CD4-positive, alpha-beta memory T cell (primary cell): ENCODE measurements at regions of chr11 and their contacts with region 1.

Region 1: DNA sequence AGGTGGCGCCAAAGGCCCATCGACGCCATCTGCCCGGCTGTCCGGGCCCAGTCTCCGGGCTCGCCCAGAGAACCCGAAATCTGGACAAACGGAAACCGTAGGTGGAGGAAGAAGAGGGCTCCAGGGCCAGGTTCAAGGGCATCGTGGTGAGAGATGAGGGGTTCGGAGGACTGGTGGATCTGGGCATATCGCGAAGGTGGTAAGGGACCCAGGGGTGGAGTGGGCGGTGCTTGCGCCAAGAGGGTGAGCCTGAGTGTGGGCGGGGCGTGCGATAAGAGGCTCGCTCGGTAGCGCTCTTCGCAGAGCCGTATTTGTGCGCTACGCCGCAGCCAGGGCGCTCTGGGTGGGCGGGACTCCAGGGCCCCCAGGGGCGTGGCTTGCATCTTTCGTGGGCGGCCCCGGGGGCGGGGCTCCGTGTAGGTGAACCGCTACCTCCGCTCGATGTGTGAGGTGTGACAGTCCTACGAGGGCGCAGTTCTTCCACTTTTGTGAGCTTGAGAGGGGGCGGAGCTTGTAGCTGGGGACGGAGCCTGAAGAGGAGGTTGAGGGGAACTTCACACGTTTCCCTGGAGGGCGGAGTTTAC is 4.8 kb downstream of the CD248 start:
- DNase-seq: peak; percentile 97 to 99 (median 98)
- H3K4me3 ChIP-seq: peak overlapping the region; percentile 43 to 88
- H3K4me3 Mint-ChIP-seq: peak overlapping the region; percentile 89 to 97 (median 94)
- H3K27ac ChIP-seq: peak overlapping the region; percentile 62
- H3K27ac Mint-ChIP-seq: peak overlapping the region; percentile 93 to 100 (median 99)
- H3K4me1 ChIP-seq: peaks cover 22% of the 10 kb centered on the region
- H3K4me1 Mint-ChIP-seq: peaks cover 4 to 20% (median 8%) of the 10 kb centered on the region in 4 donors
- H3K27me3 ChIP-seq: no peaks in the 10 kb centered on the region
- H3K27me3 Mint-ChIP-seq: peaks cover 2 to 3% of the 10 kb centered on the region in 2 donors

Region 2: GRCh38 chr11:64959498-64959897 is 1352.6 kb before region 1 on chr11:
- CTCF ChIA-PET with region 1: no interaction called
- POLR2A ChIA-PET with region 1: no interaction called
- intact Hi-C with region 1: no loop called
- DNase-seq: no peak
- H3K4me3 ChIP-seq: no peak overlapping the region
- H3K4me3 Mint-ChIP-seq: no peak overlapping the region
- H3K27ac ChIP-seq: no peak overlapping the region
- H3K27ac Mint-ChIP-seq: no peak overlapping the region
- H3K4me1 ChIP-seq: no peaks in the 10 kb centered on the region
- H3K4me1 Mint-ChIP-seq: no peaks in the 10 kb centered on the region
- H3K27me3 ChIP-seq: no peaks in the 10 kb centered on the region
- H3K27me3 Mint-ChIP-seq: peaks cover 4 to 7% of the 10 kb centered on the region in 2 donors

Region 3: GRCh38 chr11:66222358-66223149 is 89.5 kb before region 1 on chr11:
- CTCF ChIA-PET with region 1: interaction called, 12 read pairs
- POLR2A ChIA-PET with region 1: no interaction called
- intact Hi-C with region 1: no loop called
- DNase-seq: peak; percentile 92 to 97 (median 94)
- H3K4me3 ChIP-seq: no peak overlapping the region
- H3K4me3 Mint-ChIP-seq: peak overlapping the region in 3 of 8 donors; percentile 4 to 30 (median 27)
- H3K27ac ChIP-seq: peak overlapping the region; percentile 89
- H3K27ac Mint-ChIP-seq: peak overlapping the region; percentile 92 to 99 (median 98)
- H3K4me1 ChIP-seq: peaks cover 11% of the 10 kb centered on the region
- H3K4me1 Mint-ChIP-seq: peaks cover 11 to 22% (median 13%) of the 10 kb centered on the region in 4 donors
- H3K27me3 ChIP-seq: no peaks in the 10 kb centered on the region
- H3K27me3 Mint-ChIP-seq: no peaks in the 10 kb centered on the region

Region 4: DNA sequence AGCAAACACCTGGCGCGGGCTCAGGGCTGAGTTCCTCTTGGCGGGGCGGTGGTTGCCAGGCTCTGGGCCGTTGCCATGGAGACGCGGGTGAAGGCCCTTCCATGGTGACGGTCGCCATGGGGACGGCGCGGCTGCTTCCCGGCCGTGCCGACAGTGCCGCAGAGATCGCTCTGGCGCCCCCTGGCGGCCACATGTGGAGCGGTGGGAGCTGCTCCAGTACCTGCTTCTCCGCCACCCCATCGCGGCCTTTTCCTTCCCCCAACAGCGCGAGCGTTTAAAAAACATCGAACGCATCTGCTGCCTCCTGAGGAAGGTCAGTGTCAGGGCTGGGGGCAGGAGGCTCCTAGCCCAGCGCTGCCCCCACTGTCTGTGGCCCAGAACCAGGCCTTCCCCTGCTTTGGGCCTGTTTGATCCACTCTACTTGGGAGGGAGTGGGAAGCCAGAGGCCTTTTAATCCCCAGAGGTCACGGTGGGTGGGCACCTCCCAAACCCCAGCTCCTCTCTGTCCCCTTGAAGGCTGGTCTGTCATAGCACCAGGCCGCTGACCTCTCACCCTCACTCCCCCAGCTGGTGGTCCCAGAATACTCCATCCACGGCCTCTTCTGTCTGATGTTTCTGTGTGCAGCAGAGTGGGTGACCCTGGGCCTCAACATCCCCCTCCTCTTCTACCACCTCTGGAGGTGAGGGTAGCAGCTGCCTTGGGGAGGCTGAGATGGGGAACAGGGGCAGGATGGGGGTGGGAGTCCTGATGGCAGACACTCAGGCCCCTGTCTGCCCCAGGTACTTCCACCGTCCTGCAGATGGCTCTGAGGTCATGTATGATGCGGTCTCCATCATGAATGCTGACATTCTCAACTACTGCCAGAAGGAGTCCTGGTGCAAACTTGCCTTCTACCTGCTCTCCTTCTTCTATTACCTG is 29.3 kb before region 1 on chr11:
- CTCF ChIA-PET with region 1: interaction called, 29 read pairs
- POLR2A ChIA-PET with region 1: interaction called, 53 read pairs
- intact Hi-C with region 1: loop called (anchors 1 kb)
- DNase-seq: peak; percentile 98 to 99 (median 99)
- H3K4me3 ChIP-seq: no peak overlapping the region
- H3K4me3 Mint-ChIP-seq: peak overlapping the region; percentile 11 to 81 (median 55)
- H3K27ac ChIP-seq: peak overlapping the region; percentile 62
- H3K27ac Mint-ChIP-seq: peak overlapping the region; percentile 86 to 96 (median 92)
- H3K4me1 ChIP-seq: peaks cover 30% of the 10 kb centered on the region
- H3K4me1 Mint-ChIP-seq: peaks cover 10 to 46% (median 29%) of the 10 kb centered on the region in 4 donors
- H3K27me3 ChIP-seq: no peaks in the 10 kb centered on the region
- H3K27me3 Mint-ChIP-seq: peaks cover 0 to 1% of the 10 kb centered on the region in 2 donors

Region 5: GRCh38 chr11:66322732-66323427 is 10.8 kb after region 1 on chr11:
- CTCF ChIA-PET with region 1: interaction called, 24 read pairs
- POLR2A ChIA-PET with region 1: interaction called, 32 read pairs
- intact Hi-C with region 1: loop called (anchors 1 kb)
- DNase-seq: no peak
- H3K4me3 ChIP-seq: no peak overlapping the region
- H3K4me3 Mint-ChIP-seq: no peak overlapping the region
- H3K27ac ChIP-seq: no peak overlapping the region
- H3K27ac Mint-ChIP-seq: peak overlapping the region in 1 of 7 donors; percentile 4
- H3K4me1 ChIP-seq: peaks cover 35% of the 10 kb centered on the region
- H3K4me1 Mint-ChIP-seq: peaks cover 18 to 39% (median 27%) of the 10 kb centered on the region in 4 donors
- H3K27me3 ChIP-seq: no peaks in the 10 kb centered on the region
- H3K27me3 Mint-ChIP-seq: no peaks in the 10 kb centered on the region

Region 6: DNA sequence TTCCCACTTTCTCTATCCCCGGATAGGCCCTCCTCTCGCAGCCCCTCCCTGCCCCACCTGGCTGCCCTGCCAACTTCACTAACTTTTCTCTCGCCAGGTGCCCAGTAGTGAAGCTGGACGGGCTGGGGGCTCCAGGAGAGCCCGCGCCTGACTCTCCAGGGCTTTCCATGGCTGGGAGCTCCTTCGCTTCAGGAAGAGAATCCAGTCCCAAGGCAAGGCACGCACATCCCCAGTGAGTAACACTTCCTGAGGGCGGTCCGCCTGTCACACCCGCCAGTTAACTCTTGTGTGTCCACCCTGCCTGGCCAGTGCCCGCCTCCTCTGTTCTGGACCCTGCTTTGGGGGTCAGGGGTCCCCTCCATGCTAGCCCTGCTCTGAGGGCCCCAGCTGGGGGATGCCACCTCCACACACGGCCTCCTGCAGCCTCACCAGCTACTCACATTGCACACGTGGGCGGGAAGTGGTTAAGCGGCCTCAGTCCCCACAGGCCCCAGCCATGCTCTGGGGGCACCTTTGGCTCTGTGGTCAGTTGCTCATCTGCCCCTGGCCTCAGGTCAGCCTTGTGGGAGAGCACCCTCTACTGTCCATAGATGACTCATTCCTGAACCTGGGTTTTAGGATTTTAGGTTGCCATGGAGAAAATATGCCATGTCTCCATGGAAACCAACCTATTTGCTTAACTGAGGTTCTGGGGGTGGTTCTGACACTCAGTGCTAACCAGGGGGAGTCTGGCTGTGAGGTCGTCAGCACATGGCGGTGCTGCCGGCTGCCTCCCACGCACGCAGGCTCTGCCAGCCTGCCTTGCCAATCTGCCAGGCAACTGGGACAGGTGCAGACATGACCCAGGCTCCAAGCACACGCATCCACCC is 24.4 kb after region 1 on chr11 and contains the start of gene RIN1:
- CTCF ChIA-PET with region 1: interaction called, 110 read pairs
- POLR2A ChIA-PET with region 1: interaction called, 9 read pairs
- intact Hi-C with region 1: no loop called
- DNase-seq: peak in 3 of 5 donors; percentile 25 to 64 (median 36)
- H3K4me3 ChIP-seq: peak within 1 kb of the TSS in 1 of 2 donors; percentile 41
- H3K4me3 Mint-ChIP-seq: peak within 1 kb of the TSS; percentile 80 to 90 (median 84)
- H3K27ac ChIP-seq: peak within 1 kb of the TSS; percentile 29
- H3K27ac Mint-ChIP-seq: peak within 1 kb of the TSS in 6 of 7 donors; percentile 6 to 75 (median 58)
- H3K4me1 ChIP-seq: peaks cover 18% of the 10 kb centered on the region
- H3K4me1 Mint-ChIP-seq: peaks cover 10 to 27% (median 16%) of the 10 kb centered on the region in 4 donors
- H3K27me3 ChIP-seq: no peaks in the 10 kb centered on the region
- H3K27me3 Mint-ChIP-seq: no peaks in the 10 kb centered on the region
- total RNA-seq, gene RIN1: 5.8 to 10.1 TPM

Region 7: DNA sequence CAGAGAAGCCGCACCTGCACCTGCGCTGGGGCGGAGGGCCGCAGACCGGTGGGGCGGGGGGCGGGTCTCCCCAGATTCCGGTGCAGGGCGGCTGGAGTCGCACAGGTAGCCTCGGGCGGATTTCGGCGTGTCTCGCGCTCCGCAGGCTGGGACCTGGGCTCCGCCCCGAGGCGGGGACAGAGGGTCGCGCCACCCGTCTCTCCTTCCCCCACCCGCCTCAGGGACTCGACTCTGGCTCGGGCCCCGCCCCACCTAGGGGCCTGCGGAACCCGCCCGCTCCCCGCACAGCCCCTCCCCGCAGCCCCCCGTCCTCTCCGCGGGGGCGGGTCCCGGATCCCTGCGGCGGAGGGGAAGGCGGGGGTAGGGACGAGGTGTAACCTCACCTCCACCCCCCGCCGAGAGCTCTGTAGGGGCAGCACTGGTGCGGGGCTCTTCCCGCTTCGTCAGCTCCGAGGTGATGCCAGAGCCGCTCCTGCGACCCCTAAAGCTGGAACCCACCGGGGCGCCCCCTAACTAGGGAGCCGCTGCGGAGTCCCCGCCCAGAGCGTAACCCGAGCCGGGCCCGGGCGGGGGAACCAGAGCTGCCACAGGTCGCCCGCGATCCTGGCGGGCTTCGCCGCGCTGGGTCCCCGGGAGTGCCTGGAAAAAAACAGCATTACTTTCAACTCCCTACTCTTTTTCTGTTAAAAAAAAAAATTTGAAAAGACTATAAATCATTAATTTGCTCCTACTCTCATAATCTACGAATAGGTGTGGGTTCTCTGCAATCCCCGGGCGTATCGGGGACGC is 59.8 kb after region 1 on chr11 and contains the start of gene SLC29A2:
- CTCF ChIA-PET with region 1: interaction called, 10 read pairs
- POLR2A ChIA-PET with region 1: interaction called, 24 read pairs
- intact Hi-C with region 1: no loop called
- DNase-seq: peak; percentile 72 to 78 (median 72)
- H3K4me3 ChIP-seq: peak within 1 kb of the TSS; percentile 49 to 71
- H3K4me3 Mint-ChIP-seq: peak within 1 kb of the TSS; percentile 88 to 95 (median 92)
- H3K27ac ChIP-seq: peak within 1 kb of the TSS; percentile 61
- H3K27ac Mint-ChIP-seq: peak within 1 kb of the TSS; percentile 83 to 95 (median 94)
- H3K4me1 ChIP-seq: peaks cover 12% of the 10 kb centered on the region
- H3K4me1 Mint-ChIP-seq: peaks cover 5 to 17% (median 12%) of the 10 kb centered on the region in 4 donors
- H3K27me3 ChIP-seq: no peaks in the 10 kb centered on the region
- H3K27me3 Mint-ChIP-seq: no peaks in the 10 kb centered on the region
- total RNA-seq, gene SLC29A2: 15.0 to 15.5 TPM

Region 8: DNA sequence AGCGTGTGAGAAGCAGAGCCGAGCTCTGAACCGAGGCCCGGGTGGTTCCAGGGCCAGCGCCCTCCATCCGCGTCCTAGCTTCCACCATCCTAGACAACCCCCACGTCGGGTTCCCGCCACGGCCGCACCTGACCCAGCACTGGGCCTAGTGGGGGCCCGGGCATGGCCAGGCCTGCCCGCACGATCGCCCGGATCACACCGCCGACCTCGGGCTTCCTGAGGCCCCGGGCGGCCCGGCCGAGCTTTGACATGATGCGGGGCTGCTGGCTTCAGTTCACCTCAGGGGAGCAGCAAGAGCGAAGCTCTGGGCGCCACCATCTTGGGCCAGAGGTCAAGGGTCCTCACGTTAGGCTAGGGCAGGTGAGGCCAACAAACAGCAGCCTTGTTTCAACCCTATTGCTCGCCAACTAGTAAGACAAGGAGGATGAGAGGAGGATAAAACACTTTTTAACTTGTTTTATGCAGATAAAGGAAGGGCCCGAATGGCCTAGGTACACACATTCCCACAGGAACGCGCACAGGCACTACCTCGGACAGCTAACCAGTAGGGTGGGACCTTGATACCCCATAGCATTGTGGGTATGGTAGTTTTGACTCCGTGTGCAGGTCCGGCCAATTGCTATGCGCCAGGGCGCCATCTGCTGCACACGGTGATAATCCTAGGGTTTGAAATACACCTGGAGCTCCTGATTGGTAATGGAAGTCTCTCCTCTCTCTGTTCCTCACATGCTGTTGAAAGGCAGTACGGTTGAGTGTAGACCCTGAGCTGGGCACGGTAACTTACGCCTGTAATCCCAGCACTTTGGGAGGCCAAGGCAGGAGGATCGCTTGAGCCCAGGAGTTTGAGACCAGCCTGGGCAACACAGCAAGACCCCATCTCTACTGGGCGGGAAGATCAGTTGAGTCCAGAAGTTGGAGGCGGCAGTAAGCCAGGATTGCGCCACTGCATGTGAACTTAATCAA is 126.7 kb after region 1 on chr11 and contains the start of gene MRPL11:
- CTCF ChIA-PET with region 1: interaction called, 13 read pairs
- POLR2A ChIA-PET with region 1: interaction called, 11 read pairs
- intact Hi-C with region 1: loop called (anchors 2 kb)
- DNase-seq: peak; percentile 89 to 92 (median 91)
- H3K4me3 ChIP-seq: peak within 1 kb of the TSS; percentile 67 to 88
- H3K4me3 Mint-ChIP-seq: peak within 1 kb of the TSS; percentile 87 to 94 (median 91)
- H3K27ac ChIP-seq: peak within 1 kb of the TSS; percentile 69
- H3K27ac Mint-ChIP-seq: peak within 1 kb of the TSS; percentile 88 to 100 (median 98)
- H3K4me1 ChIP-seq: peaks cover 7% of the 10 kb centered on the region
- H3K4me1 Mint-ChIP-seq: peaks cover 6 to 17% (median 11%) of the 10 kb centered on the region in 4 donors
- H3K27me3 ChIP-seq: no peaks in the 10 kb centered on the region
- H3K27me3 Mint-ChIP-seq: peaks cover 2 to 3% of the 10 kb centered on the region in 2 donors
- total RNA-seq, gene MRPL11: 22.0 to 27.9 TPM